CD8-positive, alpha-beta T cell (primary cell): ENCODE measurements at regions of chr2 and their contacts with region 1.

Region 1: GRCh38 chr2:290090-290722 is 2.3 kb upstream of the ALKAL2 start:
- DNase-seq: peak in 8 of 9 experiments; percentile 30 to 73 (median 58)
- ATAC-seq: peak; percentile 59
- H3K4me3 ChIP-seq: peak overlapping the region; percentile 17 to 64
- H3K4me3 Mint-ChIP-seq: peak overlapping the region; percentile 76
- H3K27ac ChIP-seq: no peak overlapping the region
- H3K27ac Mint-ChIP-seq: no peak overlapping the region
- H3K4me1 ChIP-seq: peaks cover 14% of the 10 kb centered on the region
- H3K4me1 Mint-ChIP-seq: peaks cover 10% of the 10 kb centered on the region
- H3K27me3 ChIP-seq: peaks cover 10 to 15% of the 10 kb centered on the region in 2 experiments
- H3K27me3 Mint-ChIP-seq: peaks cover 12% of the 10 kb centered on the region
- CTCF ChIP-seq: peak; percentile 47

Region 2: DNA sequence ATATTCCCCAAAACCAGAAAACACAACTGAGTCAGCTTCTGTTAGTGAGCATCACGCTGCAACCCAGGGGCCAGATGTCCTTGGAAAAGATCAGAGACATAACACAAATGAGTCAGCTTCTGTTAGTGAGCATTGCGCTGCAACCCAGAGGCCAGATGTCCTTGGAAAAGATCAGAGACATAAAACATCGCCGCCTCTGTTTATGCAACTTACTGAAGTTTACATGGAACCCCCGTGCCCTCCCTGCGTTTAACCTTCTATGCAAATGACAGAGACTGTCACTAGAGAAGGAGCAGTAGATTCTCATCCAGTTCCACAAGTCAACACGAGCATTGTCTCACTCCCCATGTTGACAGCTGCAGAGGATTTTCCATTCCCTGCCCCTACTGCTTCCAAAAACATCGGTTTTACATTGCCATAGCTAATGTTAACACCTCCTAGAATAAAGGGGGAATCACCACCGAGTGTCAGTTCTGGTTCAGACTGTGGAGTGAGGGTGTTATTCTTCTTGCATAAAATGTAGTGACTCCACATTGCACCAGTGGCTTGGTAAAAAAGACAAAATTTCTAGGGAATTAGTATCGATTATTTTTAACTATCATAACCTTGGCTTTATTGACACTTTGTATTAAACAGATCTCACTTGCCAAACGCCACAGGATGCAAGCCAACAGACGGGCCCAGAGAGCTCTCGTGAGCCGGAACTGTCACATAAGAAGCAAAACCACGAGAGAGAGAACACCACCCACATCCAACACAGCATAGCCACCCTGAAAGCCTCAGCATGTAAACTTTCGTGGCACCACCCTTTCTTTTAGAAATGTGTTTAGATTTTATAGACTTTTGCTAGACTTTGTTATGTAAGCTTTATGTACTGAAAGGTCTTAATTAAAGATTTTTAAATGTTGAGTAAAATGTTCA is 114.1 kb before region 1 on chr2:
- CTCF ChIA-PET with region 1: interaction called, 9 read pairs
- POLR2A ChIA-PET with region 1: interaction called, 3 read pairs
- intact Hi-C with region 1: loop called in 1 of 2 experiments (anchors 1 kb)
- DNase-seq: peak; percentile 25 to 86 (median 63)
- ATAC-seq: peak; percentile 97
- H3K4me3 ChIP-seq: peak overlapping the region in 1 of 2 experiments; percentile 27
- H3K4me3 Mint-ChIP-seq: peak overlapping the region; percentile 68
- H3K27ac ChIP-seq: peak overlapping the region; percentile 27 to 32
- H3K27ac Mint-ChIP-seq: peak overlapping the region; percentile 88
- H3K4me1 ChIP-seq: peaks cover 43% of the 10 kb centered on the region
- H3K4me1 Mint-ChIP-seq: peaks cover 42% of the 10 kb centered on the region
- H3K27me3 ChIP-seq: no peaks in the 10 kb centered on the region
- H3K27me3 Mint-ChIP-seq: no peaks in the 10 kb centered on the region
- CTCF ChIP-seq: no peak

Region 3: GRCh38 chr2:246489-247144 is 43.6 kb before region 1 on chr2:
- CTCF ChIA-PET with region 1: interaction called, 7 read pairs
- POLR2A ChIA-PET with region 1: no interaction called
- intact Hi-C with region 1: loop called (anchors 1 to 2 kb)
- DNase-seq: peak in 3 of 9 experiments; percentile 32 to 73 (median 63)
- ATAC-seq: peak; percentile 38
- H3K4me3 ChIP-seq: no peak overlapping the region
- H3K4me3 Mint-ChIP-seq: no peak overlapping the region
- H3K27ac ChIP-seq: no peak overlapping the region
- H3K27ac Mint-ChIP-seq: no peak overlapping the region
- H3K4me1 ChIP-seq: peaks cover 3% of the 10 kb centered on the region
- H3K4me1 Mint-ChIP-seq: peaks cover 6% of the 10 kb centered on the region
- H3K27me3 ChIP-seq: no peaks in the 10 kb centered on the region
- H3K27me3 Mint-ChIP-seq: no peaks in the 10 kb centered on the region
- CTCF ChIP-seq: peak; percentile 60

Region 4: GRCh38 chr2:254241-254640 is 36.0 kb before region 1 on chr2:
- CTCF ChIA-PET with region 1: interaction called, 10 read pairs
- POLR2A ChIA-PET with region 1: no interaction called
- intact Hi-C with region 1: no loop called
- DNase-seq: no peak
- ATAC-seq: no peak
- H3K4me3 ChIP-seq: no peak overlapping the region
- H3K4me3 Mint-ChIP-seq: no peak overlapping the region
- H3K27ac ChIP-seq: no peak overlapping the region
- H3K27ac Mint-ChIP-seq: no peak overlapping the region
- H3K4me1 ChIP-seq: no peaks in the 10 kb centered on the region
- H3K4me1 Mint-ChIP-seq: no peaks in the 10 kb centered on the region
- H3K27me3 ChIP-seq: no peaks in the 10 kb centered on the region
- H3K27me3 Mint-ChIP-seq: no peaks in the 10 kb centered on the region
- CTCF ChIP-seq: no peak